Activated CD4-positive, alpha-beta memory T cell treated with anti-CD3 and anti-CD28 coated beads for 36 hours (primary cell): ENCODE measurements at regions of chr15 and their contacts with region 1.

Region 1: DNA sequence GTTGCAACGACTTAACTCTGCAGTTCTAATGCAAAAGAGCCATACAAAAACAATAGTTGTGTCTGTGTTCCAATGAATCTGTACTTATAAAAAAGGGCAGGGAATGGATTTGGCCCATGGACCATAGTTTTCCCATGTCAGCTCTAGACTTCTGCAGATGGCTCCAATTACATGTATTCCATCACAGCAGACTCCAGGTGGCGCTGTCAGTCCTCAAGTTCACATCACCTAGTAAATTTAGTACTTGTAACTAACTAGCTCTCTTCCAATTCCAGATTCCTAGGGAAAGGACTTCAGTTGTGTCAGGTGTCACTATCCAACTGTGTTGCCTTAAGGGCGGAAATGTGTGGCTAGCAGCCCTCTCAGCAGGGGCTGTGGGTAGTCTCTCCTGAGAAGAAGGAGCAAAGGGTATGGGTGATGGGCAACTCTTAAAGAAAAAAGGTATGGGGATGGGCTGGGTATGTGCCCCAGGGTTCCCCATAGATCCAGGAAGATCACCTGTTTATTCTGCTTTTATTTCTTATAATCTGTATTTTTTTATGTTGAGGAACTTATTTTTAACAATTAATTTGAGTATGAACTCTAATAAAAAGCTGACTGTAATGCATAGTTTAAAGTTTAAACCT is 36.2 kb downstream of the BBS4 start:
- DNase-seq: peak; percentile 77
- H3K4me3 Mint-ChIP-seq: no peak overlapping the region
- H3K27ac Mint-ChIP-seq: no peak overlapping the region
- H3K4me1 Mint-ChIP-seq: peaks cover 2% of the 10 kb centered on the region
- H3K27me3 Mint-ChIP-seq: no peaks in the 10 kb centered on the region

Region 2: GRCh38 chr15:72599855-72600464 is 122.2 kb before region 1 on chr15:
- CTCF ChIA-PET with region 1: interaction called, 13 read pairs
- POLR2A ChIA-PET with region 1: no interaction called
- intact Hi-C with region 1: no loop called
- DNase-seq: peak; percentile 21
- H3K4me3 Mint-ChIP-seq: no peak overlapping the region
- H3K27ac Mint-ChIP-seq: no peak overlapping the region
- H3K4me1 Mint-ChIP-seq: no peaks in the 10 kb centered on the region
- H3K27me3 Mint-ChIP-seq: no peaks in the 10 kb centered on the region

Region 3: DNA sequence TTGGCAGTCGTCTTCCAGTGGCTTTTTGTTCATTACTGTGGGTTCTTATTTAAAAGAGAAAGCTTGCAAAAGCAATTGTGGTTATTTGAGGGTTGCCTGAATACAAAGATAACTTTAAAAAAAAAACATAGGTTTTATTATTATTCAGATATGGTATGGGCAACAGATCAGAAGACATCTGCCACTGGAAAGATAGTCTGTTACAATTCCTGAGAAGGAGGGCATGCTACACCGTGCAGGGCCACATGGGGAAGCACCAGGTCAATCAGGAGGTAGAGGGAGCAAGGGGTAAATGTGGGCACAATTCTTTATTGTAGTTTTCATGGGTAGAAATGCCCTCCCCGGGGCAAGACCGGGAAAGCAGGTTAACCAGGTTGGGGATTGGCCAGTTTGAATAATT is 10.3 kb after region 1 on chr15:
- CTCF ChIA-PET with region 1: interaction called, 29 read pairs
- POLR2A ChIA-PET with region 1: no interaction called
- intact Hi-C with region 1: no loop called
- DNase-seq: no peak
- H3K4me3 Mint-ChIP-seq: no peak overlapping the region
- H3K27ac Mint-ChIP-seq: no peak overlapping the region
- H3K4me1 Mint-ChIP-seq: peaks cover 2% of the 10 kb centered on the region
- H3K27me3 Mint-ChIP-seq: no peaks in the 10 kb centered on the region

Region 4: GRCh38 chr15:72751751-72752455 is 29.7 kb after region 1 on chr15:
- CTCF ChIA-PET with region 1: interaction called, 35 read pairs
- POLR2A ChIA-PET with region 1: no interaction called
- intact Hi-C with region 1: no loop called
- DNase-seq: no peak
- H3K4me3 Mint-ChIP-seq: no peak overlapping the region
- H3K27ac Mint-ChIP-seq: peak overlapping the region; percentile 59
- H3K4me1 Mint-ChIP-seq: peaks cover 30% of the 10 kb centered on the region
- H3K27me3 Mint-ChIP-seq: no peaks in the 10 kb centered on the region

Region 5: GRCh38 chr15:72770673-72771328 is 48.6 kb after region 1 on chr15:
- CTCF ChIA-PET with region 1: interaction called, 10 read pairs
- POLR2A ChIA-PET with region 1: no interaction called
- intact Hi-C with region 1: no loop called
- DNase-seq: no peak
- H3K4me3 Mint-ChIP-seq: no peak overlapping the region
- H3K27ac Mint-ChIP-seq: peak overlapping the region; percentile 61
- H3K4me1 Mint-ChIP-seq: peaks cover 34% of the 10 kb centered on the region
- H3K27me3 Mint-ChIP-seq: no peaks in the 10 kb centered on the region

Region 6: GRCh38 chr15:72978223-72978622 is 256.0 kb after region 1 on chr15:
- CTCF ChIA-PET with region 1: no interaction called
- POLR2A ChIA-PET with region 1: no interaction called
- intact Hi-C with region 1: no loop called
- DNase-seq: no peak
- H3K4me3 Mint-ChIP-seq: no peak overlapping the region
- H3K27ac Mint-ChIP-seq: no peak overlapping the region
- H3K4me1 Mint-ChIP-seq: no peaks in the 10 kb centered on the region
- H3K27me3 Mint-ChIP-seq: peaks cover 19% of the 10 kb centered on the region

Region 7: DNA sequence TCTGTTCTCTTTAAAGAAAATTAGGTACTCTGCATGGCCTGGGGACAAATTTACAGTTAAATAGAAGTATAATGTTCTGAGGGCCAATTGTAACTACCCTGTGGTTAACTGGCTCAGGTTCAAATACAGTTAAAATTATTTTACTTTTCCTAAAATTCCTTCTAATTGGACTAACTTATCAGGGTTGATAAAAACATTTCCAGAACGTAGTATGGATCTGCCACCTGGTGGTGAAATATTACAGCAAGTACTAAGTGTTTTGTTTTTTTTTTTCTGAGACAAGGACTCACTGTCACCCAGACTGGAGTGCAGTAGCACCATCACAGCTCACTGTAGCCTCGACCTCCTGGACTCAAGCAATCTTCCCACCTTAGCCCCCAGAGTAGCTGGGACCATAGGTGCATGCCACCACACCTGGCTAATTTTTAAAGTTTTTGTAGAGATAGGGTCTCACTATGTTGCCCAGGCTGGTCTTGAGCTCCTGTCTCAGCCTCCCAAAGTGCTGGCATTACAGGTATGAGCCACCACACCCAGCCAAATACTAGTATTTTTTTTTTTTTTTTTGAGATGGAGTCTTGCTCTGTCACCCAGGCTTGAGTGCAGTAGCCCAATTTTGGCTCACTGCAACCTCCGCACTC is 359.3 kb after region 1 on chr15:
- CTCF ChIA-PET with region 1: interaction called, 45 read pairs
- POLR2A ChIA-PET with region 1: no interaction called
- intact Hi-C with region 1: no loop called
- DNase-seq: no peak
- H3K4me3 Mint-ChIP-seq: no peak overlapping the region
- H3K27ac Mint-ChIP-seq: no peak overlapping the region
- H3K4me1 Mint-ChIP-seq: peaks cover 2% of the 10 kb centered on the region
- H3K27me3 Mint-ChIP-seq: no peaks in the 10 kb centered on the region

Region 8: DNA sequence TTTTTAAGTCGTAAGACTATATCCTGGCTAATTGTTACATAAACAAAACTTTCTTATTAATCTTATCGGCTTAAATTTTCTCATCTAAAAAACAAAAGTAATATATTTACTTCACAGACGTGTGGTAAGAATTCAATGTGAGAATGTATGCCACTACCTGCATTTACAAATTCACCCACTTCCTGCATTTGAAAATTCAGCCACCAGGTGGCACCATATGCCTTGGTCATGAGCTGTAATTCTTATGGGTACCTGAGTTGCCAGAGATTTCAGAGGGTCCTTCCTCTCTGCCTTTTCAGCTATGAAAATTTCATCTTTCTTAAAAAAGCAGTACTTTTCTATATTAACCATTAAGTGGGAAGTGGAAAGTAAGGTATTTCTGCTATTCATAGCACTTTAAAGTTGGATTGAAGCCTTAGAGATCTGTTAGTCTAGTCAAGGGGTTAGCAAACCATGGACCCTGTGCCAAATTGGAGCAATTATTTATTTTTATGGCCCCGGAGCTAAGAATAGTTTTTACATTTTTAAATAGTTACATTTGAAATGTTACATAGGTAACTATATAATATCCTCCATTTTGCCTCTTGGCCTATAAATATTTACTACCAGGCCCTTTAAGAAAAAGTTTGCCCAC is 518.8 kb after region 1 on chr15:
- CTCF ChIA-PET with region 1: interaction called, 13 read pairs
- POLR2A ChIA-PET with region 1: no interaction called
- intact Hi-C with region 1: loop called (anchors 5 kb)
- DNase-seq: peak; percentile 82
- H3K4me3 Mint-ChIP-seq: no peak overlapping the region
- H3K27ac Mint-ChIP-seq: no peak overlapping the region
- H3K4me1 Mint-ChIP-seq: no peaks in the 10 kb centered on the region
- H3K27me3 Mint-ChIP-seq: no peaks in the 10 kb centered on the region